Activated CD8-positive, alpha-beta T cell treated with anti-CD3 and anti-CD28 coated beads, Interleukin-2, amount 10 ng/mL, durations not matched to agents 7 days and 5 days (primary cell): ENCODE measurements at regions of chr1 and their contacts with region 1.

Region 1: GRCh38 chr1:62082456-62083363 is 111.9 kb upstream of the L1TD1 start:
- DNase-seq: peak; percentile 51
- ATAC-seq: peak; percentile 51
- H3K4me3 Mint-ChIP-seq: no peak overlapping the region
- H3K27ac Mint-ChIP-seq: no peak overlapping the region
- H3K4me1 Mint-ChIP-seq: no peaks in the 10 kb centered on the region
- H3K27me3 Mint-ChIP-seq: no peaks in the 10 kb centered on the region

Region 2: DNA sequence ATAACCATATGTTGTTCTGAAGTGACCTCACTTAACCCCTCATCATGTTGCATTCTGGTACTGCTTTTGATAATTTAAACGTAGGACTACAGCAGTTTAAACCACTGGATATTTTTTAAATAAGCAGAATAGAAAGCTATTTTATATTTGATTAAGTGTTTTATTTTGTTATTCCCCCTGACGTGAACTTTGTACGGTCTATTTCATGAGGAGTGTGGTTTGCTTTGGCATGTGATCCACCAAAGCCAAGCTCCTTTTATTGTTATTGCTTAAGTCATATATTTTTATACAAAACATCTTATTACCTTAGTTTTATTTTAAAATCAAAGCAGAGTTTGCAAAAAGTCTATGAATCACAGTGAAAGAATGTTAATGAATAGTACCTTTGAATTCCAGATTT is 10.6 kb after region 1 on chr1:
- CTCF ChIA-PET with region 1: interaction called, 26 read pairs
- POLR2A ChIA-PET with region 1: no interaction called
- DNase-seq: no peak
- ATAC-seq: no peak
- H3K4me3 Mint-ChIP-seq: no peak overlapping the region
- H3K27ac Mint-ChIP-seq: no peak overlapping the region
- H3K4me1 Mint-ChIP-seq: no peaks in the 10 kb centered on the region
- H3K27me3 Mint-ChIP-seq: no peaks in the 10 kb centered on the region

Region 3: DNA sequence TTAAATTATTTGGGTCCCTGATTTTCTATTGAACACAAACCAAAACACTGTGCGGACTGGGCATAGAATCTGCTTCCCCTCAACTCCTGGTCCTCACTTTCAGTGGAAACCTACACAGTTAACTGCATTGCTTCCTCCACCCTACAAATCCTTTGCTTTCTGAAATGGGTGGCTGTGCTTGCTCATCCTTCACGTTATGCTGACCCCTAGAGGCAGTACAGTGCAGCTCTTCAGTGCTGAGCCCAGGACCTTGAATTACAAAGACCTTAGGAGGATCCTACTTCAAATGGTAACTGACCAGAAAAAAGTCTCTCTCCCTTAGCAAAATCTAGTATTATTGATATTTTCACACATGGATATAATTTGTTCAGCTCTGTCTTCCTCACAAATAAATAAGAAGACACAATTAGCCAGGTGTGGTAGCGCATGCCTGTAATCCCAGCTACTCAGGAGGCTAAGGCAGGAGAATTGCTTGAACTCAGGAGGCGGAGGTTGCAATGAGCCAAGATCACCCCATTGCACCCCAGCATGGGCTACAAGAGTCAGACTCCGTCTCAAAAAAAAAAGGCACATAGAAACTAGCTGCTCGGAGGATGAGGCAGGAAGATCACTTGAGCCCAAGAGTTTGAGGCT is 48.5 kb after region 1 on chr1:
- CTCF ChIA-PET with region 1: interaction called, 12 read pairs
- POLR2A ChIA-PET with region 1: no interaction called
- DNase-seq: peak; percentile 57
- ATAC-seq: peak; percentile 81
- H3K4me3 Mint-ChIP-seq: no peak overlapping the region
- H3K27ac Mint-ChIP-seq: no peak overlapping the region
- H3K4me1 Mint-ChIP-seq: no peaks in the 10 kb centered on the region
- H3K27me3 Mint-ChIP-seq: no peaks in the 10 kb centered on the region

Region 4: GRCh38 chr1:62144238-62144831 is 61.6 kb after region 1 on chr1:
- CTCF ChIA-PET with region 1: interaction called, 21 read pairs
- POLR2A ChIA-PET with region 1: no interaction called
- DNase-seq: peak; percentile 59
- ATAC-seq: no peak
- H3K4me3 Mint-ChIP-seq: no peak overlapping the region
- H3K27ac Mint-ChIP-seq: no peak overlapping the region
- H3K4me1 Mint-ChIP-seq: no peaks in the 10 kb centered on the region
- H3K27me3 Mint-ChIP-seq: no peaks in the 10 kb centered on the region